Natural killer cell (primary cell): ENCODE measurements at regions of chr14 and their contacts with region 1.

Region 1: GRCh38 chr14:74905375-74906142 is 17.5 kb downstream of the RPS6KL1 start:
- DNase-seq: peak; percentile 76 to 89
- ATAC-seq: peak; percentile 60 to 82 (median 76)
- H3K4me3 ChIP-seq: no peak overlapping the region
- H3K4me3 Mint-ChIP-seq: no peak overlapping the region
- H3K27ac ChIP-seq: no peak overlapping the region
- H3K27ac Mint-ChIP-seq: peak overlapping the region; percentile 52 to 53
- H3K4me1 ChIP-seq: peaks cover 24% of the 10 kb centered on the region
- H3K4me1 Mint-ChIP-seq: peaks cover 0 to 6% of the 10 kb centered on the region in 2 donors
- H3K27me3 ChIP-seq: no peaks in the 10 kb centered on the region
- H3K27me3 Mint-ChIP-seq: no peaks in the 10 kb centered on the region
- CTCF ChIP-seq: peak; percentile 82

Region 2: GRCh38 chr14:74860906-74861733 is 44.4 kb before region 1 on chr14:
- intact Hi-C with region 1: loop called (anchors 1 kb)
- DNase-seq: peak; percentile 92
- ATAC-seq: peak; percentile 81 to 94 (median 88)
- H3K4me3 ChIP-seq: no peak overlapping the region
- H3K4me3 Mint-ChIP-seq: no peak overlapping the region
- H3K27ac ChIP-seq: no peak overlapping the region
- H3K27ac Mint-ChIP-seq: no peak overlapping the region
- H3K4me1 ChIP-seq: peaks cover 5% of the 10 kb centered on the region
- H3K4me1 Mint-ChIP-seq: peaks cover 3 to 9% of the 10 kb centered on the region in 2 donors
- H3K27me3 ChIP-seq: no peaks in the 10 kb centered on the region
- H3K27me3 Mint-ChIP-seq: no peaks in the 10 kb centered on the region
- CTCF ChIP-seq: peak; percentile 84

Region 3: DNA sequence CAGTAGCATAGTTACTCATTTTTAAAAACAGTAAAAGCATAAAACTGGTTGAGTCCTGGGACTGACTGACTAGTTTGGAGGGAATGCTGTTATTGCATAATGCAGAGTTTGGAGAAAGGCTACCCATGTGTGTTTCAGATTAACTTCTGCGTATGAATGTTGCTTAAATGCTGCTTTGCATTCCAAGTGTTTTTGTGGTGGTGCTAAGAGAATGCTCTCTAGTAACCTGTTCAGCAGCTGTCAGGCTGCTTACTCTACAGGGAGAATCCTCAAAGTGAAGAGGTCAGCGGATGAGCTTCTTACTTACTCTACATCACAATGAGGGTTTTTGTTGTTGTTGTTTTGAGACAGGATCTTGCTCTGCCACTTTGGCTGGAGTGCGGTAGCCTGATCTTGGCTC is 19.6 kb before region 1 on chr14:
- intact Hi-C with region 1: no loop called
- DNase-seq: no peak
- ATAC-seq: no peak
- H3K4me3 ChIP-seq: no peak overlapping the region
- H3K4me3 Mint-ChIP-seq: no peak overlapping the region
- H3K27ac ChIP-seq: no peak overlapping the region
- H3K27ac Mint-ChIP-seq: peak overlapping the region; percentile 97 to 98
- H3K4me1 ChIP-seq: peaks cover 30% of the 10 kb centered on the region
- H3K4me1 Mint-ChIP-seq: peaks cover 60 to 65% of the 10 kb centered on the region in 2 donors
- H3K27me3 ChIP-seq: no peaks in the 10 kb centered on the region
- H3K27me3 Mint-ChIP-seq: no peaks in the 10 kb centered on the region
- CTCF ChIP-seq: no peak

Region 4: GRCh38 chr14:75720842-75721498 is 815.4 kb after region 1 on chr14:
- intact Hi-C with region 1: no loop called
- DNase-seq: no peak
- ATAC-seq: no peak
- H3K4me3 ChIP-seq: no peak overlapping the region
- H3K4me3 Mint-ChIP-seq: no peak overlapping the region
- H3K27ac ChIP-seq: no peak overlapping the region
- H3K27ac Mint-ChIP-seq: no peak overlapping the region
- H3K4me1 ChIP-seq: no peaks in the 10 kb centered on the region
- H3K4me1 Mint-ChIP-seq: peaks cover 0 to 5% of the 10 kb centered on the region in 2 donors
- H3K27me3 ChIP-seq: no peaks in the 10 kb centered on the region
- H3K27me3 Mint-ChIP-seq: no peaks in the 10 kb centered on the region
- CTCF ChIP-seq: no peak